A549 (cell line): ENCODE measurements at regions of chr17 and their contacts with region 1.

Region 1: GRCh38 chr17:30236766-30237165 is 1.3 kb upstream of the SLC6A4 start:
- DNase-seq: peak; percentile 70 to 91
- ATAC-seq: peak; percentile 82 to 91
- H3K4me3 ChIP-seq: peak overlapping the region; percentile 57; the same call in 2 of the 3 replicates
- H3K27ac ChIP-seq: peak overlapping the region in 1 of 2 experiments; percentile 48; a peak in 1 of 6 replicates
- H3K4me1 ChIP-seq: peaks cover 13% of the 10 kb centered on the region
- CTCF ChIP-seq: peak; percentile 64
- EP300 ChIP-seq: no peak
- POLR2A ChIP-seq: no peak
- RAD21 ChIP-seq: peak; percentile 75 to 82

Region 2: DNA sequence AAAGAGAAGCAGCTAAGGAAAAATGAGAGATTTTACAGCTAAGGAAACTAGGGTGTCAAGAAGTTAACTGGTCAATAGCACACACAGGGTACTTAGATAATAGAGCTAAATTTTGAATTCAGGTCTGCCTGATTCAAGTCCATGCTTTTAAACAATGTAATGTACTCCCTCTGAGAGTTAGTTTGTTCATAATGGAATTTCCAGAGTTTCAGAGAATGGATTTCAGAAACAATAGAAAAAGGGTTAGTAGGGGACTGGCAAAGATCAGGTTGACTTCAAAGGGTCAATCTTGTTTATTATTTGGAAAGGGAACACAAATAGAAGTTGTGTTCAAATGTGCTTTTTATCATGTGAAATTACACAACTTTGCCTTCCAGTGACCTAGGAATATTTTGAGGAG is 102.2 kb before region 1 on chr17:
- CTCF ChIA-PET with region 1: interaction called, 13 read pairs
- POLR2A ChIA-PET with region 1: no interaction called
- DNase-seq: no peak
- ATAC-seq: no peak
- H3K4me3 ChIP-seq: no peak overlapping the region
- H3K27ac ChIP-seq: no peak overlapping the region
- H3K4me1 ChIP-seq: 0 out of 3 replicates have a peak, but pooled peaks cover 4% of the 10 kb centered on the region
- CTCF ChIP-seq: no peak
- EP300 ChIP-seq: no peak
- POLR2A ChIP-seq: no peak
- RAD21 ChIP-seq: no peak

Region 3: DNA sequence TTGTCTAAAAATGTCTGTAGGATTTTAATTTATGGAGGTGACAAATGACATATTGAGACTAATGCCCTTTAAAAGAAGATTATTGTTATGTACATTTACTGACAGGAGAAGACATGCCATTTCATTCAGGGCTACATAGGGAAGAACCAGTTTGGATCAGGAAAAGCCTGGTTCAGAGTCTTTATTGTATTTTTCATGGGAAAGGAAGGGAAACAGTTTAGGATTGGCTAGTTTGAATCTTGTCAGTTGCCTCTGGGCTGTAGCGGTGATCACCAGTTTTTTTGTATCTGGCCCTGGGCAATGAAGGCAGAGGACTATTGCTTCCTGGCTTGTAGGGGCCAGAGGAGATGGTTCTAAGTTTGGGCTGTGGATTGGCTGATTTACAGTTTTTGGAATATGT is 88.4 kb before region 1 on chr17:
- CTCF ChIA-PET with region 1: interaction called, 10 read pairs
- POLR2A ChIA-PET with region 1: no interaction called
- DNase-seq: no peak
- ATAC-seq: no peak; a peak in 1 of 6 replicates
- H3K4me3 ChIP-seq: no peak overlapping the region
- H3K27ac ChIP-seq: no peak overlapping the region
- H3K4me1 ChIP-seq: peaks cover 7% of the 10 kb centered on the region
- CTCF ChIP-seq: no peak
- EP300 ChIP-seq: no peak
- POLR2A ChIP-seq: no peak
- RAD21 ChIP-seq: no peak

Region 4: GRCh38 chr17:30222721-30223175 is 14.0 kb before region 1 on chr17:
- CTCF ChIA-PET with region 1: interaction called, 53 read pairs
- POLR2A ChIA-PET with region 1: no interaction called
- DNase-seq: no peak
- ATAC-seq: no peak
- H3K4me3 ChIP-seq: no peak overlapping the region
- H3K27ac ChIP-seq: no peak overlapping the region
- H3K4me1 ChIP-seq: no peaks in the 10 kb centered on the region
- CTCF ChIP-seq: no peak
- EP300 ChIP-seq: no peak
- POLR2A ChIP-seq: no peak
- RAD21 ChIP-seq: no peak

Region 5: DNA sequence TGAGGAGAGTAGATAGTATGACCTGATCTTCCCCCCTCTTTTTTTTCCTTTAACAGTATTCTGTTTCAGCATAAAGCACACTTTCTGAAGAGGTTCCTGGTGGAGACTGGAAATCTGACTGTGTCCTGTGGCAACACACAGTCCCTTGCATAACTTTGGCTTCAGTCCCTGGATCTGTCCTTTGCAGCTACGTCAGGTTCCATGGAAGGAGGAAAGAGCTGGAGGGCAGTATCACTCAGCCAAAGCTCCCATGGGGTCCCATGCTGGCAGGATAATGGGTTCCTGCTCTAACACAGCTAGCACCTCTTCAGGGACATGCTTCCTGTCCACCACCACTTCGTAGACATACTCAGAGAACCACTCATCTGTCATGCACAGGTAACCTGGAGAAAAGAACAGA is 12.0 kb after region 1 on chr17:
- CTCF ChIA-PET with region 1: interaction called, 10 read pairs
- POLR2A ChIA-PET with region 1: no interaction called
- DNase-seq: no peak
- ATAC-seq: no peak
- H3K4me3 ChIP-seq: no peak overlapping the region
- H3K27ac ChIP-seq: no peak overlapping the region
- H3K4me1 ChIP-seq: no peaks in the 10 kb centered on the region
- CTCF ChIP-seq: no peak
- EP300 ChIP-seq: no peak
- POLR2A ChIP-seq: no peak
- RAD21 ChIP-seq: no peak

Region 6: DNA sequence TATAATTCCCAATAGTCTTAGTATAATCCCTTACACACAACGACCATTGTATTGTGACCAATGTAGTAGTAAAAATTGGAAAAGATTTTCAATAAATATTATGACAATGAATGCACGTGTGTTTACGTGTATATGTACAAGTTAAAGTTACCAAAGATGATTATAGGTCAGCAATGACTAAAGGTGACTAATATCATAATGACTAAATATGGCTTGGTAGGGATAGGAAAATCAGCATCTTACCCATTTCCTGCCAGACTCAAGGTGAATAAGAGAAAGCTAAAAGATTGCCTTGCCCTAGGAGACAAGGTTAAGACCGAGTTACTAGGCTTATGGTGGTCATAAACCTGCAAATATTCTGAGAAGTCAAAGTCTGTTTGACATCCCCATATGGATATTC is 176.3 kb after region 1 on chr17:
- CTCF ChIA-PET with region 1: no interaction called
- POLR2A ChIA-PET with region 1: no interaction called
- DNase-seq: no peak
- ATAC-seq: no peak
- H3K4me3 ChIP-seq: no peak overlapping the region
- H3K27ac ChIP-seq: no peak overlapping the region
- H3K4me1 ChIP-seq: no peaks in the 10 kb centered on the region
- CTCF ChIP-seq: no peak
- EP300 ChIP-seq: no peak
- POLR2A ChIP-seq: no peak
- RAD21 ChIP-seq: no peak